PC-3 (cell line): ENCODE measurements at regions of chr17 and their contacts with region 1.

Region 1: DNA sequence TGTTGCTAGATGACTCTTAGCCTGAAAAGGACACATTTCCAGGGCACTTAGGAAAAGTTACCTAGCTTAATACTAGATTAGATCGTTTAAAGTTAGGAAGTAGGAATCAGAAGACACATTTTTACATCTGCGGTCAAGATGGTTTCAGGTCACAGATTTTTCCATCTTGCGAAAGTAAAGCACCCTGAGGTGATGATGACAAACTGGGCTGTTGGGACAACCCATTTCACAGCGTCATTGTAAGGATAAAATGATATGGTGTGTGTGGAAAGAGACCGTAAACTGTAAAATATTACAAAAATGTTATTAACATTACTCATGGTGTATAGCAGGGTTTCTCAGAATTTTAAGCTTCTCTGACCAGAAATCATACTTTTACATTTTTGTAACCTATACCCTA is 10.1 kb upstream of the MAP2K6 start:
- DNase-seq: peak; percentile 74
- ATAC-seq: no peak
- H3K4me3 ChIP-seq: peak overlapping the region; percentile 12; the same call in 1 of the 2 replicates
- H3K27ac ChIP-seq: peak overlapping the region; percentile 61
- H3K4me1 ChIP-seq: peaks cover 47% of the 10 kb centered on the region
- H3K27me3 ChIP-seq: no peaks in the 10 kb centered on the region
- CTCF ChIP-seq: no peak

Region 2: GRCh38 chr17:69414408-69415274 is 10.3 kb after region 1 on chr17 and contains the start of gene MAP2K6:
- CTCF ChIA-PET with region 1: interaction called, 6 read pairs
- POLR2A ChIA-PET with region 1: interaction called, 7 read pairs
- intact Hi-C with region 1: loop called (anchors 1 kb)
- DNase-seq: peak; percentile 90
- ATAC-seq: peak; percentile 92
- H3K4me3 ChIP-seq: peak within 1 kb of the TSS; percentile 72
- H3K27ac ChIP-seq: peak within 1 kb of the TSS; percentile 29
- H3K4me1 ChIP-seq: peaks cover 36% of the 10 kb centered on the region
- H3K27me3 ChIP-seq: no peaks in the 10 kb centered on the region
- CTCF ChIP-seq: no peak
- total RNA-seq, gene MAP2K6: 8.4 and 12.2 TPM in 2 replicates

Region 3: GRCh38 chr17:69492410-69493071 is 88.2 kb after region 1 on chr17:
- CTCF ChIA-PET with region 1: no interaction called
- POLR2A ChIA-PET with region 1: no interaction called
- intact Hi-C with region 1: loop called (anchors 5 kb)
- DNase-seq: peak; percentile 92
- ATAC-seq: peak; percentile 100
- H3K4me3 ChIP-seq: no peak overlapping the region
- H3K27ac ChIP-seq: no peak overlapping the region
- H3K4me1 ChIP-seq: peaks cover 13% of the 10 kb centered on the region
- H3K27me3 ChIP-seq: no peaks in the 10 kb centered on the region
- CTCF ChIP-seq: peak; percentile 32; the same call in 1 of the 2 replicates

Region 4: DNA sequence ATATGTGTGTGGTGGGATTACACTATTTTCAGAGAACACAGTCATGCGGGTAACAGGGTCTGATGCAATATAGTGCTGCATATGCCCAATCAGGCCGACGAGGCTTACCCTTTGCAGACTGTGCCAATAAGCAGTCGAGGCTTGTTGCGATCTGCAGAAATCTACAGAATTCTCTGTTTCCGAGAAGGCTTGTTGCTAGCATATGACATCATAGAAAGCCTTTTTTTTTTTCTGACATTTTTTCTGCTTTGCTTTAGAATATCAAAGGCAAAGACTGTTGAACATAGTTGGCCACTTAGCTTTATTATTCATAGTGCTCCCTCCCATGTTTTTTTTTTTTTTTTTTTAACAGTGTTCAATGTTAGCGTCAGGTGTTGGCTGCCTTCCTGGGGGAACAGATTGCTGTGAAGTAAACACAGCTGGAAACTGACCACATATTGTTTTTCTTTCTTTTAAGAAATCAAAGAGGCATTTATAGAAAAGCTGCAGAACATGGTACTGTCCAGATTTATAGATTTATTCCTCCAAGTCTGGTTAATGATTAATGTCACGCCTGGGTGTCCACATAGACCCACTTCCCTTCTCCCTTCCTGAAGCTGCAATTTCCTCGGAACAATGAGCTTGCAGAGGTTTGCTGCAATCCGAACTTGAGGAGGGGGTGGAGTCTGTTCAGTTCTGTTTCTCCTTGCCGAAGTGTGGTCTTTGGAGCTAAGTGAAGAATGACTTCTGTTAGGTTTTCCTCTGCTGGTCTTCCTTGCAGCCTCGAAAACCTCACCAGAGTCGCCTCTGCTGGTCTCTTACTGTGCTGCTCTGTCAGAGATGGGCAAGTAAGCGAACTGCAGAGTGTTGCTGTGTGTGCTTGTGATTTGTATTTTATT is 97.4 kb after region 1 on chr17:
- CTCF ChIA-PET with region 1: no interaction called
- POLR2A ChIA-PET with region 1: interaction called, 14 read pairs
- intact Hi-C with region 1: no loop called
- DNase-seq: peak; percentile 24
- ATAC-seq: peak; percentile 56
- H3K4me3 ChIP-seq: peak overlapping the region; percentile 9; the same call in 1 of the 2 replicates
- H3K27ac ChIP-seq: no peak overlapping the region
- H3K4me1 ChIP-seq: peaks cover 8% of the 10 kb centered on the region; the same call in 1 of the 2 replicates
- H3K27me3 ChIP-seq: no peaks in the 10 kb centered on the region
- CTCF ChIP-seq: no peak